ENCODE measurements at regions of chr17 and their contacts with region 1.

Region 1: DNA sequence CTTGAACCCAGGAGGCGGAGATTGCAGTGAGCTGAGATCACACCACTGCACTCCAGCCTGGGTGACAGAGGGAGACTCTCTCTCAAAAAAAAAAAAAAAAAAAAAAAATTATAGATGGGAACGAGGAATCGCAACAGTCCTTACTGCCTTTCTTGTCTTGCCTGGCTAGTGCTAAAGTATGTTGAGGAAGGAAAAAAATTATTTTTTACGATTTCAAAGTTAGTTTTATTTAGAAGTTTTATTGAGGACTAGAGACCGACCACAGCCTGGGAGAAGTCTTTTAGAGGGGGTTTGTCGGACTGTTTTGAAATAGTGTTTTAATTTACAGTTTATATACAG is 15.8 kb upstream of the DNAH17 start:
- DNase-seq: no peak
- H3K4me3 Mint-ChIP-seq: no peak overlapping the region
- H3K27ac Mint-ChIP-seq: no peak overlapping the region
- H3K4me1 Mint-ChIP-seq: peaks cover 10% of the 10 kb centered on the region
- H3K27me3 Mint-ChIP-seq: no peaks in the 10 kb centered on the region

Region 2: DNA sequence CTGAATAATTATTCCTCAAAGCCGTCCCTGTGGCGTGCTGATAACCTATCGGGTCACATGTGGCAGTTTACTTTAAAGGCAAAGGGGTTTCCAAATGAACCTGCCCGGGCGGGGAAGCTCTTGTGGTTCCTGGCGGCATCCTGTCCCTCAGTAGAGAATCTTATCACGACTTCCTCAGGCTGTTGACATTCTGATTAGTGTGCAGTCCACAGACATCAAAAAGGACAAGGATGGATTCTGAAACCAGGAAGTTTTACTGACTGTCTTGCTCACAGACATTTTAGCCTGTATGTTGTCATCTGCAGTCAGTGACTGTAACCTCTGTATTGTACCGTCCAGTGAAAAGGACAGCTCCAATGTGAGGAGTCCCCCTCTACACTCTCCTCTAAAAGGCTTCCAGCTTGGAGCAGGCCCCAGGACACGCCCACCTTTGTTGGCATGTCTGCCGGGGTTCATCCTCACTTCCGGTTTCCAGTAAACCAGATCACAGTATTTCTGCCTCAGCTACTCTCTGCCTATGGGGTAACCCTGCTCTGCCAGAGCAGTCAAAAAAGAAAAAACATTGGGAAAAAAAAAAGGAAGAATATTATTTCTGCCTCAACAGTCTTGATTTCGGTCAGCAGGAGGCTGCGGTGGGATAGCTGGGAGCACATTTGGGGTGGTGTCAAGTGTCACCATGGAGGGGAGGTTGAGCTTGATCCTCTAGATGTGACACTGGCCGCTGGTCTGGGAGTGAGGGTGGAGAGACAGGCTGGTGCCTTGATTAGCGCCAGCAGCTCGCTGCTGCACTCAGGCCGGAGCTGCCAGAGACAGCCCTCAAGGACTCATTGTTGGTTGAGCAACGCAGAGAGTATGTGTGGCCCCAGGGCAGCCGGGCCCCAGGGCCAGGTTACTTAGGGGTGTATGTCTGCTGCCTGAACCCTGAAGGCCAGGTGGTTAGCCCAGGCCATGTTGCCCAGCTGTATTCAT is 73.3 kb after region 1 on chr17:
- intact Hi-C with region 1: loop called (anchors 1 kb)
- DNase-seq: peak; percentile 44
- H3K4me3 Mint-ChIP-seq: peak overlapping the region; percentile 62
- H3K27ac Mint-ChIP-seq: peak overlapping the region; percentile 67
- H3K4me1 Mint-ChIP-seq: peaks cover 32% of the 10 kb centered on the region
- H3K27me3 Mint-ChIP-seq: no peaks in the 10 kb centered on the region